ENCODE measurements at regions of chr16 and their contacts with region 1.

Region 1: DNA sequence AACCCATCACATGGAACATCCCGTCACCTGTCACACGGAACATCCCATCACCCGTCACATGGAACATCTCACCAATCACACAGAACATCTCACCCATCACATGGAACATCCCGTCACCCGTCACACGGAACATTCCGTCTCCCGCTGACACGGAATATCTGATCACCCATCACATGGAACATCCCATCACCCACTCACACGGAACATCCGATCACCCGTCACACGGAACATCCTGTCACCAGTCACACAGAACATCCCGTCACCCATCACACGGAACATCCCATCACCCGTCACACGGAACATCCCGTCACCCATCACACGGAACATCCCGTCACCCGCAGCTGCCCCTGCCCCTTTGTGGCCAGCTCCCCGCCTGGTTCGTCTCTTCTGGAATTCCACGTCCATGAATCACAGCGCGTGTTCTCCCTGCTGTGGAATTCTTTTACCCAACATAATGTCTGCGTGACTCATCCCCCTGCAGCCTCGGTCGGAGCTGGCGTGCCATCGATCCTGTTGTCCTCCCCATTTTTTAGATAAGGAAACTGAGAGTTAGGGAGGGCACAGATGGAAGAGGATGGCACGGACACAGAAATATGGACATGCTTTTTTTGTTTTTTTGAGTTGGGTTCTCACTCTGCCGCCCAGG is 5.6 kb downstream of the CPNE7 start:
- DNase-seq: peak; percentile 74
- H3K4me3 ChIP-seq: no peak overlapping the region
- H3K27ac ChIP-seq: peak overlapping the region; percentile 53
- H3K4me1 ChIP-seq: peaks cover 18% of the 10 kb centered on the region
- H3K27me3 ChIP-seq: peaks cover 0 to 1% of the 10 kb centered on the region in 2 experiments
- CTCF ChIP-seq: no peak
- POLR2A ChIP-seq: no peak

Region 2: GRCh38 chr16:89623511-89624261 is 42.5 kb after region 1 on chr16:
- CTCF ChIA-PET with region 1: interaction called, 3 read pairs
- POLR2A ChIA-PET with region 1: no interaction called
- dilution Hi-C with region 1: no loop called
- intact Hi-C with region 1: loop called (anchors 5 kb)
- DNase-seq: peak; percentile 82
- H3K4me3 ChIP-seq: no peak overlapping the region
- H3K27ac ChIP-seq: peak overlapping the region; percentile 37
- H3K4me1 ChIP-seq: peaks cover 12% of the 10 kb centered on the region
- H3K27me3 ChIP-seq: peaks cover 0 to 8% of the 10 kb centered on the region in 2 experiments
- CTCF ChIP-seq: no peak
- POLR2A ChIP-seq: no peak